ENCODE measurements at regions of chr4 and their contacts with region 1.

Region 1: DNA sequence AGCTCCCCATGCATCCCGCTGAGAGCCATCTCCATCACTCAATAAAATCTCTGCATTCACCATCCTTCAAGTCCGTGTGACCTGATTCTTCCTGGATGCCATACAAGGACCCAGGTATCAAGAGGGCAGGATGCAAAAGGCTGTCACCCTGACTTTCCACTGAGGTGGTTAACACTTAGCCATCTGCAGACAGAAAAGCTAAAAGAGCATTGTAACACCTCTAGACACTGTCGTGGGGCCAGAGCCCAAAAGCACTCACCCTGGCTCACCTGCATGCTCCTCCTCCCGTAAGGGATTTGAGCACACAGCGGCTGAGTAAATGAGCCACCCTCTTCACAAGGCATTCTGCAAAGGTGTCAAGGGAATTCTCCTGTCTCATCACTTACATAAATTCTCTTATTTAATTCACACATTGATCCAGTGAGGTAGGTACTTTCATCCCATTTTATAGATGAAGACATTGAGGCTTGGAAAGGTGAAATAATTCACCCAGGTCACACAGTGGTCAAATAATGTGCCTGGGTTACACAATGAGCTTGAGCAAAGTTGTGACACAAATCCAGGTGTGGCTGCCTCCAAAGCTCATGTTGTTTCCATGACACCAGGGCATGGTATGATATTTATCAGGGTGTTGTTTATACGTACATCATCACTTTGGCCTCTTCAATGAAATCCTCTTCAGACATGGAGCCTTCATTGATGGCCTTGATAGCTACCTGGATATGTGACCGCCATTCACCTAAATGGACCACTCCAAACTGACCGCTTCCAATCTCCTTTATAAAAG is 48.0 kb downstream of the TXK start:
- DNase-seq: no peak
- ATAC-seq: no peak
- H3K4me3 ChIP-seq: no peak overlapping the region
- H3K27ac ChIP-seq: no peak overlapping the region
- H3K4me1 ChIP-seq: no peaks in the 10 kb centered on the region
- H3K27me3 ChIP-seq: no peaks in the 10 kb centered on the region
- CTCF ChIP-seq: no peak
- POLR2A ChIP-seq: no peak

Region 2: DNA sequence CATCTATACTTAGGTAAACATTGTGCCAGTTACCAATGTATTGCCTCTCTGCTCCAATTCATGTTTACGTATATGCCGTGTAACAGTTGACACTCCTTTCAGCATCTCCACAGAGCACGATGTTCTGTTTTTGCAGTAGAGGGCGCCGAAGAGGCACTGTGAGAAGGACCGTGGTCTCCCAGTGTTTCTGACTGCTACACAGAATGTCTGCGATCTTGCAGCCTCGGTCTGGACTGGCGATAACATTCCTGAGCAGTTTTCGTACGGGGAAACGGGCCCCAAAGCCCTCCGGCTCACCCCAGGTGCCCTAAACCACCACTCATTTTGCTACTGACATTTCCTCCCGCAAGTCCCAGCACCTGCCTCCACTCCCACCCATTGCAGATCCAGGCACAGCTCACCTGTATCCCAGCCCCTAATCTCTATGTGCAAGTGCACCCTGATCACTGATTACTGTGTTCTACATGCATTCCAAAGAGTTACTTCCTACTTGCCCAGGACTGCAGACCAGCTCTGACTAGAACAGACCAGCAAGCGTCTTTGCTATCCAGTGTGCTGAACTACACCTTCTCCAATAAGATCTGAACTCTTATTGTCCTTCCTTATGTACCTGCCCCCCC is 159.3 kb before region 1 on chr4:
- intact Hi-C with region 1: loop called (anchors 2 to 10 kb)
- DNase-seq: peak in 4 of 5 donors; percentile 24 to 45 (median 32)
- ATAC-seq: peak; percentile 47 to 90 (median 81)
- H3K4me3 ChIP-seq: peak overlapping the region in 2 of 12 donors; percentile 14 to 16
- H3K27ac ChIP-seq: no peak overlapping the region
- H3K4me1 ChIP-seq: peaks cover 0 to 7% (median 0%) of the 10 kb centered on the region in 12 donors
- H3K27me3 ChIP-seq: peaks cover 0 to 11% (median 0%) of the 10 kb centered on the region in 9 donors
- CTCF ChIP-seq: peak; percentile 45 to 73 (median 56)
- POLR2A ChIP-seq: no peak

Region 3: GRCh38 chr4:47933840-47934239 is 152.2 kb before region 1 on chr4:
- intact Hi-C with region 1: loop called in 8 of 10 experiments (anchors 5 to 10 kb)
- DNase-seq: no peak
- ATAC-seq: peak in 1 of 4 donors; percentile 58
- H3K4me3 ChIP-seq: no peak overlapping the region
- H3K27ac ChIP-seq: no peak overlapping the region
- H3K4me1 ChIP-seq: peaks cover 0 to 5% (median 0%) of the 10 kb centered on the region in 12 donors
- H3K27me3 ChIP-seq: peaks cover 0 to 7% (median 0%) of the 10 kb centered on the region in 9 donors
- CTCF ChIP-seq: peak; percentile 44 to 77 (median 66)
- POLR2A ChIP-seq: no peak

Region 4: GRCh38 chr4:48002267-48002666 is 83.7 kb before region 1 on chr4:
- intact Hi-C with region 1: loop called in 9 of 10 experiments (anchors 1 to 5 kb)
- DNase-seq: no peak
- ATAC-seq: no peak
- H3K4me3 ChIP-seq: no peak overlapping the region
- H3K27ac ChIP-seq: no peak overlapping the region
- H3K4me1 ChIP-seq: no peaks in the 10 kb centered on the region
- H3K27me3 ChIP-seq: no peaks in the 10 kb centered on the region
- CTCF ChIP-seq: no peak
- POLR2A ChIP-seq: no peak

Region 5: GRCh38 chr4:48008021-48008596 is 77.9 kb before region 1 on chr4:
- intact Hi-C with region 1: loop called in 9 of 10 experiments (anchors 1 to 5 kb)
- DNase-seq: no peak
- ATAC-seq: no peak
- H3K4me3 ChIP-seq: no peak overlapping the region
- H3K27ac ChIP-seq: no peak overlapping the region
- H3K4me1 ChIP-seq: no peaks in the 10 kb centered on the region
- H3K27me3 ChIP-seq: no peaks in the 10 kb centered on the region
- CTCF ChIP-seq: no peak
- POLR2A ChIP-seq: no peak

Region 6: GRCh38 chr4:48016141-48017103 is 69.6 kb before region 1 on chr4 and contains the starts of genes CNGA1 and NIPAL1:
- intact Hi-C with region 1: loop called in 4 of 10 experiments (anchors 5 kb)
- DNase-seq: peak; percentile 61 to 86 (median 76)
- ATAC-seq: peak; percentile 91 to 99 (median 97)
- H3K4me3 ChIP-seq: peak within 1 kb of the TSS; percentile 39 to 85 (median 66)
- H3K27ac ChIP-seq: peak within 1 kb of the TSS in 6 of 12 donors; percentile 1 to 64 (median 46)
- H3K4me1 ChIP-seq: peaks cover 0 to 18% (median 8%) of the 10 kb centered on the region in 12 donors
- H3K27me3 ChIP-seq: peaks cover 0 to 36% (median 8%) of the 10 kb centered on the region in 9 donors
- CTCF ChIP-seq: peak in 8 of 12 donors; percentile 12 to 51 (median 38)
- POLR2A ChIP-seq: no peak
- total RNA-seq, gene CNGA1: 0.34 to 1.9 (median 0.73) TPM in 6 of 9 donors, not detected in the others
- total RNA-seq, gene NIPAL1: 0.05 to 0.92 (median 0.34) TPM in 7 of 9 donors, not detected in the others

Region 7: GRCh38 chr4:48706736-48707135 is 620.7 kb after region 1 on chr4:
- intact Hi-C with region 1: no loop called
- DNase-seq: no peak
- ATAC-seq: no peak
- H3K4me3 ChIP-seq: no peak overlapping the region
- H3K27ac ChIP-seq: no peak overlapping the region
- H3K4me1 ChIP-seq: peaks cover 0 to 10% (median 0%) of the 10 kb centered on the region in 12 donors
- H3K27me3 ChIP-seq: no peaks in the 10 kb centered on the region
- CTCF ChIP-seq: no peak
- POLR2A ChIP-seq: no peak